Activated naive CD4-positive, alpha-beta T cell treated with anti-CD3 and anti-CD28 coated beads, Interleukin-2, amount 10 ng/mL, durations not matched to agents 7 days and 5 days (primary cell): ENCODE measurements at regions of chr19 and their contacts with region 1.

Region 1: GRCh38 chr19:7868676-7869452 is 5.3 kb downstream of the PRR36 start:
- DNase-seq: peak; percentile 86
- H3K4me3 Mint-ChIP-seq: peak overlapping the region; percentile 71
- H3K27ac Mint-ChIP-seq: peak overlapping the region; percentile 81
- H3K4me1 Mint-ChIP-seq: peaks cover 53% of the 10 kb centered on the region
- H3K27me3 Mint-ChIP-seq: peaks cover 85% of the 10 kb centered on the region

Region 2: DNA sequence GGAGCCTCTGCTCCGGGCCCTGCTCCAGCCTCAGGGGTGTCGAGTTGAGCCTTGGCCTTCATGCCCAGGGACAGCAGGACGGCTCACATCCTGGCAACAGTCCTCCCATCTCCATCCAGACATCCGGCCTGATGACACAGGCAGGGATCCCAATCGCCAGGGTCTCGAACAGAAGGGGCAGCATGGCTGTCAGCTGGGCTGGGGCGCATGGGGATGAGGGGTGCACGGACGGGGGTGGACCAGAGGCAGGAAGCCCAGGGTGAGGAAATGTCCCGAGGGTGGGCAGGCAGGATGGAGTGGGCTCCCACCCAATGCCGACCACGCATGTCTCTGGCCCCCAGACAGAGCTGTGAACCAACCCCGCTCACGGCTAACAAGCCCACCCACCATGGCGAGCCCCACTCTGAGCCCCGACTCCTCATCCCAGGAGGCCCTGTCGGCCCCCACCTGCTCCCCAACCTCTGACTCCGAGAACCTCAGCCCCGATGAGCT is 22.7 kb before region 1 on chr19:
- CTCF ChIA-PET with region 1: no interaction called
- DNase-seq: no peak
- H3K4me3 Mint-ChIP-seq: no peak overlapping the region
- H3K27ac Mint-ChIP-seq: no peak overlapping the region
- H3K4me1 Mint-ChIP-seq: no peaks in the 10 kb centered on the region
- H3K27me3 Mint-ChIP-seq: no peaks in the 10 kb centered on the region

Region 3: GRCh38 chr19:7879836-7880235 is 11.0 kb after region 1 on chr19:
- CTCF ChIA-PET with region 1: interaction called, 10 read pairs
- DNase-seq: peak; percentile 35
- H3K4me3 Mint-ChIP-seq: no peak overlapping the region
- H3K27ac Mint-ChIP-seq: no peak overlapping the region
- H3K4me1 Mint-ChIP-seq: peaks cover 11% of the 10 kb centered on the region
- H3K27me3 Mint-ChIP-seq: peaks cover 23% of the 10 kb centered on the region

Region 4: DNA sequence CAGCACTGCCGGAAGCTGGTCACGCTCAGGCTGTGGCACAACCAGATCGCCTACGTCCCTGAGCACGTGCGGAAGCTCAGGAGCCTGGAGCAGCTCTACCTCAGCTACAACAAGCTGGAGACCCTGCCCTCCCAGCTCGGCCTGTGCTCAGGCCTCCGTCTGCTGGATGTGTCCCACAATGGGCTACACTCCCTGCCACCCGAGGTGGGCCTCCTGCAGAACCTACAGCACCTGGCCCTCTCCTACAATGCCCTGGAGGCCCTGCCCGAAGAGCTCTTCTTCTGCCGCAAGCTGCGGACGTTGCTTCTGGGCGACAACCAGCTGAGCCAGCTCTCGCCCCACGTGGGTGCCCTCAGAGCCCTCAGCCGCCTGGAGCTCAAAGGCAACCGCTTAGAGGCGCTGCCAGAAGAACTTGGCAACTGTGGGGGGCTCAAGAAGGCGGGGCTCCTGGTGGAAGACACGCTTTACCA is 31.6 kb after region 1 on chr19:
- CTCF ChIA-PET with region 1: interaction called, 10 read pairs
- DNase-seq: no peak
- H3K4me3 Mint-ChIP-seq: no peak overlapping the region
- H3K27ac Mint-ChIP-seq: no peak overlapping the region
- H3K4me1 Mint-ChIP-seq: peaks cover 26% of the 10 kb centered on the region
- H3K27me3 Mint-ChIP-seq: peaks cover 18% of the 10 kb centered on the region

Region 5: DNA sequence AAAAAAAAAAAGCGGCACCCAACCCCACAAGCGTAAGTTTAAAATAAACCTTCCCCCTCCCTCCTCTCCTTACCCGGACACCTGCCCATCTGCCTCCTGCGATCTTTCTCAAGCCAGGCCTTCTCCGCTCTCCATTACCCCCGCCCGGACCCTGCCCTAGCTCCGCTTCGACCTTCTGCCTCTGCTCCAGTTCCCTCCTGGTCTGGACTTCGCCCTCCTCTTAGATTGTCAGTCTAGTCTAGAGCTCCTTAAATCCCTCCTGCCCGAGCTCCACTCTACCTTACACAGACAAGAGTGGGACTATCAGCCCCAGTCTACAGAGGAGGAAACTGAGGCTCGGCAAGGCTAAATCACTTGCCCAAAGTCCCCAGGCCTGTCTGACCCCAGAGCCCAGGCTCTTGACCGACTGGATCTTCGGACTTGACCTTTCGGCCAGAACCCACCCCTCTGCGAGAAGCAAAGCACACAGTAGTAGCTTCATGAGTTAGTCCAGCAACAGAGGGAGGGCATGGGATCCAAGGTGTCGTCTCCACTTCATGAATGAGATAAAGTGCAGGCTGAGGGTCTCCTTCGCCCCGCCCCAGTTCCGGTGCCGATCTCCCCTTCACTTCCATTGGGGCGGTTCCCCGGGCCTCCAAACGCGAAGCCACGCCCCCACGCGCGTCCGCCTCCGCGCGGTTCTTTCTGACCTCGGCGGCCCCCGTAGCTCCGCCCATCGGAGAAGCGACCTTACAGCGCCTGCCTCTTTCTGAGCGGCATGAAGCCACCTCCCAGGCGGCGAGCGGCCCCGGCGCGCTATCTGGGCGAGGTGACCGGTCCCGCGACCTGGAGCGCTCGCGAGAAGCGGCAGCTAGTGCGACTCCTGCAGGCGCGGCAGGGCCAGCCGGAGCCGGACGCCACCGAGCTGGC is 51.0 kb after region 1 on chr19 and contains the start of gene SNAPC2:
- CTCF ChIA-PET with region 1: interaction called, 14 read pairs
- DNase-seq: peak; percentile 97
- H3K4me3 Mint-ChIP-seq: peak within 1 kb of the TSS; percentile 83
- H3K27ac Mint-ChIP-seq: peak within 1 kb of the TSS; percentile 89
- H3K4me1 Mint-ChIP-seq: peaks cover 44% of the 10 kb centered on the region
- H3K27me3 Mint-ChIP-seq: peaks cover 58% of the 10 kb centered on the region